PC-9 (cell line): ENCODE measurements at regions of chr1 and their contacts with region 1.

Region 1: GRCh38 chr1:111164151-111164550 is 24.1 kb downstream of the CEPT1 start:
- DNase-seq: no peak
- H3K4me3 ChIP-seq: no peak overlapping the region
- H3K27ac ChIP-seq: no peak overlapping the region
- H3K4me1 ChIP-seq: no peaks in the 10 kb centered on the region
- H3K27me3 ChIP-seq: no peaks in the 10 kb centered on the region
- CTCF ChIP-seq: no peak

Region 2: DNA sequence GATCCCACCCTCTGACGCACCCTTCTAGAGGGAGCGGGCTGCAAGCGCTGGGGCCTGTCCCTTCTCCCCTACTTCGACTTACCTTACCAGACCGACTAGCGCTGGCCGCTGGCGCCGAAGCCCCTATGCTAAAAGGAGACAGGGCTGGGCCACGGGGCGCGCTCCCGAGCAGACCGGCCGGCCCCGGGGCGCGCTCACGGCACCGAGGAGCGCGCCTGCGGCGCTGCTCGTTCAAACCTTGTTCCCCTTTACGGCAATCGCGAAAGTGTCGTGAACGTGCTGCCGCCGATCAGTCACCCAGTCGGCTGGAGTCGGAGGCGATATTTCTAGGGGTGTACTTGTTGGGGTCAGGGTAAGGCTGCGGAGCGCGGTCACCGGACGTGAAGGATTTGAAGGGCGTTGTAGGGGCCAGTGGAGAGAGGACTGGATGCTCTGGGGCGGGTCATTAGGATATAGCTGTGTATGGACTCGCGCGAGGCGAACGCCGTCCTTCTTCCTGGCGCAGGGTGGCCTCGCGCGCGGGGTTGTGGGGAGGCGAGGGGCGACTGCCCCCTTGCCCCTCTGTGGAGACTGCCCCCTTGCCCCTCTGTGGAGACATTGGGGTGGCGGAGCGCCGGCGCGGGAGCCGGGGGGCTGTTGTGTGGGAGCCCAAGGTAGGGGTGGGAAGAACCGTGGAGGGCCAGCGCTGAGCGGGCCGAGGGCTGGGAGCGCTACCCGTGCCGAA is 24.0 kb before region 1 on chr1 and contains the starts of genes CEPT1 and DRAM2:
- CTCF ChIA-PET with region 1: no interaction called
- POLR2A ChIA-PET with region 1: interaction called, 11 read pairs
- intact Hi-C with region 1: no loop called
- DNase-seq: peak; percentile 92 to 93
- H3K4me3 ChIP-seq: peak within 1 kb of the TSS; percentile 72
- H3K27ac ChIP-seq: peak within 1 kb of the TSS; percentile 70
- H3K4me1 ChIP-seq: peaks cover 28% of the 10 kb centered on the region
- H3K27me3 ChIP-seq: no peaks in the 10 kb centered on the region
- CTCF ChIP-seq: 0 out of 2 replicates have a peak, but pooled peaks have one; percentile 15
- total RNA-seq, gene CEPT1: 29.1 and 33.6 TPM in 2 replicates
- total RNA-seq, gene DRAM2: 34.8 and 37.9 TPM in 2 replicates